GM12878 (cell line): ENCODE measurements at regions of chrX and their contacts with region 1.

Region 1: DNA sequence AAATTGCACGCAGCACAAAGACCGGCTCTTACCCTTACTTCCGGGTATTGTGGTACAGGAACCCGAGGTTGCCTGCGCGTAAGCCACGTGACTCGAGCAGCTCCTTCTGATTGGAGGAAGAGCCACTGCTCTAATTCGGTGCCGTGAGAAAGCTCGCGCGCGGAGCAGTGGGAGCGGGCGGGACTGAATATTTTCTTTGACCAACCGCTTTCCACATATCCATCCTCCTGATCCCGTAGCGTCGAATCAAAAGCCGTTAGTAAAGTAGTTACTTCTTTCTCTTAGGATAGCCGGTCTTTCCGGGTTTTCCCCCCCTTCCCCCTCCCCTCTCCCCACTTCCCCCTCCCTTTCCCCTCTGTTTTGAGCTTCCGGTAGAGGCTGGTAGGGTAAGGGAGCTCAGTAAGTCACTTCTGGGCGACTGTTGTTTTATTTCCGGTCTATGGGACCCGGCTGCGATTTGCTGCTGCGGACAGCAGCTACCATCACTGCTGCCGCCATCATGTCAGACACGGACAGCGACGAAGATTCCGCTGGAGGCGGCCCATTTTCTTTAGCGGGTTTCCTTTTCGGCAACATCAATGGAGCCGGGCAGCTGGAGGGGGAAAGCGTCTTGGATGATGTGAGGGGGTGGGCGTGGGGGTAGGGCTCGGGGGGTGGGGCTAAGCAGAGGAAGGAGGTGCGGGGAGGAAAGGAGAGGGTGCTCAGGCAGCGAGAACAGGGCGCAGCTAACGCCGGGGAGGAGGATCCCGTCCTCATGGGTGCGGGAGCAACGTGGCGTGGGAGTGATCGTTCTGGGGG is at the start of gene TAF1:
- DNase-seq: peak; percentile 95
- ATAC-seq: peak; percentile 93
- H3K4me3 ChIP-seq: peak within 1 kb of the TSS; percentile 59
- H3K27ac ChIP-seq: peak within 1 kb of the TSS; percentile 85
- H3K4me1 ChIP-seq: no peaks in the 10 kb centered on the region
- H3K27me3 ChIP-seq: no peaks in the 10 kb centered on the region
- CTCF ChIP-seq: no peak
- EP300 ChIP-seq: no peak
- POLR2A ChIP-seq: peak; percentile 87
- RAD21 ChIP-seq: no peak
- polyA plus RNA-seq, gene TAF1: 4.1 to 4.8 TPM

Region 2: DNA sequence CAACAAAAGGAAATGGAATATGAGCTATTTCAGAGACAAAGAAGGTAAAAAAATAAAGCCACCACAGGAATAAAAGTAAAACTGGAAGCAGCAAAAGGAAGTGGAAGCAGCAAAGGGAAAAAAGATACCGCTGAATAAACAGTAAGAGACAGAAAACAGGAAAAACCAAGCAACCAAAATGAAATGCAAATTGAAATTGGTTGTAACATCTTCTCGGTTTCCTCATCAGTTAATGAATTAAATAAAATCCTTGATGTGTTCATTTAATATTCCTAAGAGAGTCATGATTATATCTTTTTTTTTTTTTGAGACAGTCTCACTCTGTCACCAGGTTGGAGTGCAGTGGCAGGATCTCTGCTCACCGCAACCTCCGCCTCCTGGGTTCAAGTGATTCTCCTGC is 788.6 kb before region 1 on chrX:
- CTCF ChIA-PET with region 1: no interaction called
- POLR2A ChIA-PET with region 1: no interaction called
- RAD21 ChIA-PET with region 1: no interaction called
- SMC1A ChIA-PET with region 1: no interaction called
- in situ Hi-C with region 1: no loop called
- intact Hi-C with region 1: no loop called
- DNase-seq: no peak
- ATAC-seq: no peak
- H3K4me3 ChIP-seq: no peak overlapping the region
- H3K27ac ChIP-seq: no peak overlapping the region
- H3K4me1 ChIP-seq: no peaks in the 10 kb centered on the region
- H3K27me3 ChIP-seq: no peaks in the 10 kb centered on the region
- CTCF ChIP-seq: no peak
- EP300 ChIP-seq: no peak
- POLR2A ChIP-seq: no peak
- RAD21 ChIP-seq: no peak

Region 3: DNA sequence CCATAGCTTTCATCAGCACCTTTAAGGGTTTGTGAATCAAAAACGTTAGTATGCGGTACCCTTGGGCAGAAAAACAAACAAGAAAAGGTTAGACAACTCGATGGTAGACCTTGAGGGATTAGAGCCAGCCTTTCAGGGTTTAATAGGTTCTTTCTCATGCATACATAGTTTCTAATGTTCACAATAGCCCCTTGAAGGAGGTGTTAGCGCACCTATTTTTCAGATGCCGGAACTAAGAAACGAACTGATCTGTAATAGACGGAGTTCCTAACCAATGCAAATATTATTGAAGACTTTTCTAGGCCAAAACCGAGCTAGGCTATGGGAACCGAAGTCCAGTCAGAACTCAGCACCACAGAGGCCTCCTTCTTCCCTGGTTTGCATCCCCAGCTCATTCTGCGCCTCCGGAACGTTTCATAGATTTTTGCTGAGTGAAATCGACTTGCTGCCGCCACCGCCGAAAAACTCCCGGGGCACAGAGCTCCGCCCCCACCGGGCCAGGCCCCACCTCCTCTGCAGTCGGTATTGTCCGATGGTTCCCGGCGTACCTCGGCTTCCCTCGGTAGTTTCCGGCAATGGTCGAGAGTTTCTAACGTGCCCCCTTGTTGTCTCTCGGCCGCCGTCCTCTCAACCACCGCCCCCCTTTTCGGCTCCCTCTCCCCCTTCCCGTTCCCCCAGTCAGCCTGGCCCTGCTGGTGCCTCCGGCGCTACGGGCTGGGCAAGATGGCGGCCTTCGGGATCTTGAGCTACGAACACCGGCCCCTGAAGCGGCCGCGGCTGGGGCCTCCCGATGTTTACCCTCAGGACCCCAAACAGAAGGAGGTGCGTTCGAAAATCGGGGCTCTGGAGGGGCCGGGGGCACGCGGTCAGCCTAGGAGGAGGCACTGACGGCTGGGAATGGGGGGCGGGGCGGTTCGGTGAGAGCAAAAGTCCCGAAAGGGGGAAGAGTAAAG is 247.8 kb before region 1 on chrX and contains the start of gene MED12:
- CTCF ChIA-PET with region 1: no interaction called
- POLR2A ChIA-PET with region 1: interaction called, 6 read pairs
- RAD21 ChIA-PET with region 1: no interaction called
- SMC1A ChIA-PET with region 1: no interaction called
- in situ Hi-C with region 1: no loop called
- intact Hi-C with region 1: loop called (anchors 10 kb)
- DNase-seq: peak; percentile 52
- ATAC-seq: peak; percentile 99
- H3K4me3 ChIP-seq: peak within 1 kb of the TSS; percentile 85
- H3K27ac ChIP-seq: peak within 1 kb of the TSS; percentile 81
- H3K4me1 ChIP-seq: peaks cover 2% of the 10 kb centered on the region; the same call in 1 of the 2 replicates
- H3K27me3 ChIP-seq: no peaks in the 10 kb centered on the region
- CTCF ChIP-seq: no peak
- EP300 ChIP-seq: no peak
- POLR2A ChIP-seq: peak; percentile 67
- RAD21 ChIP-seq: no peak
- polyA plus RNA-seq, gene MED12: 0.68 to 1.7 TPM

Region 4: DNA sequence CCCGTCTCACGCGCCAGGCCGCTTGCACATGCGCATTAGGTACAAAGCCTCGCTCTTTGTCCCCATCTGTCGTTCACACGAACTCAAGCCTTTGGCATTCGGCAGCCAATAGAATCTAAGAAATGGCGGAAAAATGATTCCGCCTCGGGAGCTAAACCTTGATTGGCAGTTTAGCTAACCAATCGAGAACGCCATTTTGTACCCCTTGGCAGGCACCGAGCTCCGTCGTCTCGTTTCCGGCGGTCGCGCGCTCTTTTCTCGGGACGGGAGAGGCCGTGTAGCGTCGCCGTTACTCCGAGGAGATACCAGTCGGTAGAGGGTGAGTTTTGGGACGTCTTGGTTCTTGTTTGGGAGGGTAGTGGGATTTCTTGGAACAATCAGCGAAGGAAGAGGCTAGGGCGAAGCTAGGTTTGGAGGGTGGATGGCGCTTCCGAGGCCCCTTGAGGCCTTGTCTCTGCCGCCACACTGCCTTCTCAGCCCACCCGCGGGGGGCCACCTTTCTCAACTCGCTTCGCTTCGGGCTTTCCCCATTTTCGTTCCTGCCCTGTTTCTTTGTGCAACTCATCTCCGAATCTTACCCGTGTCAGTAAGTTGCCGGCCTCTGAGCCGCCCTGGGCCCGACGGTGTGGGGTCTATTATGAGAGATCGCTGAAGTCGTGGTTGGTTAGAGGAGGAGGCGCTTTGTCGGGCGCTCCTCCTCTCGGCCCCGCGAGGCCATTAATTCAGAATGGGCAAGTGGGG is 82.5 kb before region 1 on chrX and contains the start of gene NONO:
- CTCF ChIA-PET with region 1: interaction called, 4 read pairs
- POLR2A ChIA-PET with region 1: interaction called, 9 read pairs
- RAD21 ChIA-PET with region 1: interaction called, 13 read pairs
- SMC1A ChIA-PET with region 1: interaction called, 4 read pairs
- in situ Hi-C with region 1: no loop called
- intact Hi-C with region 1: loop called (anchors 5 kb)
- DNase-seq: peak; percentile 90
- ATAC-seq: peak; percentile 85
- H3K4me3 ChIP-seq: peak within 1 kb of the TSS; percentile 78
- H3K27ac ChIP-seq: peak within 1 kb of the TSS; percentile 91
- H3K4me1 ChIP-seq: peaks cover 4% of the 10 kb centered on the region
- H3K27me3 ChIP-seq: no peaks in the 10 kb centered on the region
- CTCF ChIP-seq: peak in 1 of 3 experiments; percentile 20; a peak in 1 of 6 replicates
- EP300 ChIP-seq: no peak
- POLR2A ChIP-seq: peak; percentile 88
- RAD21 ChIP-seq: no peak
- polyA plus RNA-seq, gene NONO: 206 to 359 TPM

Region 5: GRCh38 chrX:71532753-71533425 is 166.8 kb after region 1 on chrX and contains the start of gene OGT:
- CTCF ChIA-PET with region 1: no interaction called
- POLR2A ChIA-PET with region 1: interaction called, 4 read pairs
- RAD21 ChIA-PET with region 1: interaction called, 10 read pairs
- SMC1A ChIA-PET with region 1: interaction called, 5 read pairs
- in situ Hi-C with region 1: no loop called
- intact Hi-C with region 1: loop called (anchors 5 kb)
- DNase-seq: peak; percentile 79
- ATAC-seq: peak; percentile 86
- H3K4me3 ChIP-seq: peak within 1 kb of the TSS; percentile 71
- H3K27ac ChIP-seq: peak within 1 kb of the TSS; percentile 83
- H3K4me1 ChIP-seq: 0 out of 2 replicates have a peak, but pooled peaks cover 3% of the 10 kb centered on the region
- H3K27me3 ChIP-seq: no peaks in the 10 kb centered on the region
- CTCF ChIP-seq: no peak
- EP300 ChIP-seq: peak in 1 of 2 experiments; percentile 49; a peak in 1 of 4 replicates
- POLR2A ChIP-seq: peak; percentile 82
- RAD21 ChIP-seq: no peak
- polyA plus RNA-seq, gene OGT: 38.2 to 43.8 TPM